ENCODE measurements at regions of chr19 and their contacts with region 1.

Region 1: DNA sequence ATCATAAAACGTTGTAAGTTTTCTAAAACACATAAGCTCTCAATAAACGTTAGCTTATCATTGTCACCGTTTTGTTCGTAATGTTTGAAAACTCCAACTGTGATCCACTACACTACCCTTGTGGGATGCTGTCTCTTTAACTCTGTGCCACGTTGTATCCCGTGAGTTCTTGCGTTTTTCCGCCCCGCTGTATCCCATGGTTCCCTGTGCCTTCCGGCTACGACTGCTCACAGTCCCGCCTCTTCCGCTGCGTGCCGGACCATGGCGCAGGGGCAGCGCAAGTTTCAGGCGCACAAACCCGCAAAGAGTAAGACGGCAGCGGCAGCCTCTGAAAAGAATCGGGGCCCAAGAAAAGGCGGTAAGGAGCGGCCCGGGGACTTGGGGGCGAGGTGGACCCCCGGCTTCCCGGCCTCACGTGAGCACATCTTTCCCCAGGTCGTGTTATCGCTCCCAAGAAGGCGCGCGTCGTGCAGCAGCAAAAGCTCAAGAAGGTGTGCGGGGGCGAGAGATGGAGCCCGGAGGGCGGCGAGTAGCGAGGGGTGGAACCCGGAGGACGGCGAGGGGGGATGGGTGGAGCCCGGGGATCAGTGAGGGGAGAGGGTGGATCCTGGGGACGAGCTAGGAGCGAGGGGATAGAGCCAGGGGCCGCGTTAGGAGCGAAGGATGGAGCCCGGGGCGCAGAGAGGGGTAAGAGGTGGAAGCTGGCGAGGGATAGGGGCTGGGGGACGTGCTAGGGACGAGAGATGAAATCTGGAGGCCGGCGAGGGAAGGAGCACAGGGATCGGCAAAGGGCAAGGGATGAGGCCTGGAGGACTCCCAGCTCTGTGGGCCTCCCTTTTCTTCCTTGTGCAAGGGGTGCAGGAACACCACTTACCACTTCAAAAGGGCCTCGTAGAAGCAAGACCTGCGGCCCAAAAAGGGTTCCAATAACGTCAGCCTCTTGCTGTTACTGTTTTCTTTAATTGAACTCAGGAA is at the start of gene C19orf53:
- DNase-seq: peak; percentile 77 to 93 (median 86)
- ATAC-seq: peak; percentile 92
- H3K4me3 ChIP-seq: peak within 1 kb of the TSS; percentile 85
- H3K4me3 Mint-ChIP-seq: peak within 1 kb of the TSS; percentile 99
- H3K27ac ChIP-seq: peak within 1 kb of the TSS; percentile 80 to 84
- H3K27ac Mint-ChIP-seq: peak within 1 kb of the TSS; percentile 93
- H3K4me1 ChIP-seq: peaks cover 35% of the 10 kb centered on the region
- H3K4me1 Mint-ChIP-seq: peaks cover 29% of the 10 kb centered on the region
- H3K27me3 ChIP-seq: no peaks in the 10 kb centered on the region
- H3K27me3 Mint-ChIP-seq: no peaks in the 10 kb centered on the region
- CTCF ChIP-seq: no peak
- total RNA-seq, gene C19orf53: 119 TPM

Region 2: GRCh38 chr19:13117772-13118423 is 656.6 kb before region 1 on chr19 and contains the start of gene NACC1:
- CTCF ChIA-PET with region 1: no interaction called
- POLR2A ChIA-PET with region 1: no interaction called
- intact Hi-C with region 1: loop called in 1 of 2 experiments (anchors 10 kb)
- DNase-seq: peak; percentile 77 to 94 (median 87)
- ATAC-seq: peak; percentile 79
- H3K4me3 ChIP-seq: peak within 1 kb of the TSS; percentile 99
- H3K4me3 Mint-ChIP-seq: peak within 1 kb of the TSS; percentile 96
- H3K27ac ChIP-seq: peak within 1 kb of the TSS in 1 of 2 donors; percentile 48
- H3K27ac Mint-ChIP-seq: peak within 1 kb of the TSS; percentile 73
- H3K4me1 ChIP-seq: peaks cover 61% of the 10 kb centered on the region
- H3K4me1 Mint-ChIP-seq: peaks cover 66% of the 10 kb centered on the region
- H3K27me3 ChIP-seq: no peaks in the 10 kb centered on the region
- H3K27me3 Mint-ChIP-seq: no peaks in the 10 kb centered on the region
- CTCF ChIP-seq: no peak
- total RNA-seq, gene NACC1: 13.0 to 13.5 TPM

Region 3: DNA sequence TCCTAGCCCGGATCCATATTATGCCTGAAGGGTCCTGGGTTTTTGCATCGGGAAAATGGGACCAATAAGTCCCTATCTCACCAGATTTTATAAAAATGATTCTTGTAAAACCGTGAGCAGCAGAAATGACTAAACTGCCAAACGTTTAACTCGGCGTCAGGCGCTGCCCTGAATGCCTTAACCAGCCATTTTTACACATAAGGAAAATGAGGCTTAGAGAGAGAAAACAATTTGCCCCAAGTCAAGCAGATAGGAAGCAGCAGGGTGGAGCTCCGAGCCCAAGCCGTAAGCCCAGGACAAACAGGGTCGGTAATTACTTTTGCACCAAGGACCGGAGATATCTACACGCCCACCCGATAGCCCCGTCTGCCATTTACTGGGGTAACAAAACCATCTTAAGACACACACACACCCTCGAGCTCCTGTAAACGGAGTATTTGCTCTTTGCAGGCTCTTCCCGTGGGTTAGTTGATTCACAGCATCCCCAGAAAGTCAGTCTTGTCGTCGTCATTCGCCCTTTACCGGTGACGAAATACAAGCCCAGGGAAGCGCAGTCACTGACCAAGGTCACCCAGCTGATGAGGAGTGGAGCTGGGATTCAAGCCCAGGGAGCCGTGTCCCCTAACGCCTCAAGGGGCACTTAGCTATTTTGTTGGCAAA is 26.2 kb before region 1 on chr19:
- CTCF ChIA-PET with region 1: no interaction called
- POLR2A ChIA-PET with region 1: interaction called, 39 read pairs
- intact Hi-C with region 1: loop called in 1 of 2 experiments (anchors 1 kb)
- DNase-seq: peak in 7 of 14 experiments; percentile 10 to 58 (median 24)
- ATAC-seq: peak; percentile 15
- H3K4me3 ChIP-seq: peak overlapping the region; percentile 98
- H3K4me3 Mint-ChIP-seq: peak overlapping the region; percentile 91
- H3K27ac ChIP-seq: peak overlapping the region; percentile 79 to 95
- H3K27ac Mint-ChIP-seq: peak overlapping the region; percentile 87
- H3K4me1 ChIP-seq: peaks cover 34% of the 10 kb centered on the region
- H3K4me1 Mint-ChIP-seq: peaks cover 30% of the 10 kb centered on the region
- H3K27me3 ChIP-seq: no peaks in the 10 kb centered on the region
- H3K27me3 Mint-ChIP-seq: no peaks in the 10 kb centered on the region
- CTCF ChIP-seq: no peak

Region 4: GRCh38 chr19:13784731-13785452 is 10.4 kb after region 1 on chr19:
- CTCF ChIA-PET with region 1: interaction called, 3 read pairs
- POLR2A ChIA-PET with region 1: interaction called, 36 read pairs
- intact Hi-C with region 1: no loop called
- DNase-seq: peak; percentile 54 to 86 (median 70)
- ATAC-seq: peak; percentile 63
- H3K4me3 ChIP-seq: peak overlapping the region; percentile 3
- H3K4me3 Mint-ChIP-seq: peak overlapping the region; percentile 71
- H3K27ac ChIP-seq: no peak overlapping the region
- H3K27ac Mint-ChIP-seq: peak overlapping the region; percentile 84
- H3K4me1 ChIP-seq: peaks cover 52% of the 10 kb centered on the region
- H3K4me1 Mint-ChIP-seq: peaks cover 27% of the 10 kb centered on the region
- H3K27me3 ChIP-seq: no peaks in the 10 kb centered on the region
- H3K27me3 Mint-ChIP-seq: no peaks in the 10 kb centered on the region
- CTCF ChIP-seq: peak; percentile 86

Region 5: GRCh38 chr19:13846557-13847406 is 72.3 kb after region 1 on chr19:
- CTCF ChIA-PET with region 1: no interaction called
- POLR2A ChIA-PET with region 1: interaction called, 10 read pairs
- intact Hi-C with region 1: no loop called
- DNase-seq: peak; percentile 86 to 99 (median 96)
- ATAC-seq: peak; percentile 61
- H3K4me3 ChIP-seq: peak overlapping the region; percentile 76
- H3K4me3 Mint-ChIP-seq: peak overlapping the region; percentile 86
- H3K27ac ChIP-seq: peak overlapping the region; percentile 100
- H3K27ac Mint-ChIP-seq: peak overlapping the region; percentile 99
- H3K4me1 ChIP-seq: peaks cover 86% of the 10 kb centered on the region
- H3K4me1 Mint-ChIP-seq: peaks cover 63% of the 10 kb centered on the region
- H3K27me3 ChIP-seq: no peaks in the 10 kb centered on the region
- H3K27me3 Mint-ChIP-seq: no peaks in the 10 kb centered on the region
- CTCF ChIP-seq: no peak

Region 6: GRCh38 chr19:14081325-14082093 is 307.0 kb after region 1 on chr19:
- CTCF ChIA-PET with region 1: no interaction called
- POLR2A ChIA-PET with region 1: no interaction called
- intact Hi-C with region 1: loop called in 1 of 2 experiments (anchors 2 kb)
- DNase-seq: peak; percentile 98 to 100 (median 99)
- ATAC-seq: peak; percentile 94
- H3K4me3 ChIP-seq: peak overlapping the region; percentile 81
- H3K4me3 Mint-ChIP-seq: peak overlapping the region; percentile 91
- H3K27ac ChIP-seq: peak overlapping the region; percentile 73 to 74
- H3K27ac Mint-ChIP-seq: peak overlapping the region; percentile 73
- H3K4me1 ChIP-seq: peaks cover 23% of the 10 kb centered on the region
- H3K4me1 Mint-ChIP-seq: peaks cover 14% of the 10 kb centered on the region
- H3K27me3 ChIP-seq: no peaks in the 10 kb centered on the region
- H3K27me3 Mint-ChIP-seq: no peaks in the 10 kb centered on the region
- CTCF ChIP-seq: no peak